ENCODE measurements at regions of chr1 and their contacts with region 1.

Region 1: GRCh38 chr1:155379631-155380090 is 59.0 kb downstream of the RUSC1 start:
- DNase-seq: no peak

Region 2: DNA sequence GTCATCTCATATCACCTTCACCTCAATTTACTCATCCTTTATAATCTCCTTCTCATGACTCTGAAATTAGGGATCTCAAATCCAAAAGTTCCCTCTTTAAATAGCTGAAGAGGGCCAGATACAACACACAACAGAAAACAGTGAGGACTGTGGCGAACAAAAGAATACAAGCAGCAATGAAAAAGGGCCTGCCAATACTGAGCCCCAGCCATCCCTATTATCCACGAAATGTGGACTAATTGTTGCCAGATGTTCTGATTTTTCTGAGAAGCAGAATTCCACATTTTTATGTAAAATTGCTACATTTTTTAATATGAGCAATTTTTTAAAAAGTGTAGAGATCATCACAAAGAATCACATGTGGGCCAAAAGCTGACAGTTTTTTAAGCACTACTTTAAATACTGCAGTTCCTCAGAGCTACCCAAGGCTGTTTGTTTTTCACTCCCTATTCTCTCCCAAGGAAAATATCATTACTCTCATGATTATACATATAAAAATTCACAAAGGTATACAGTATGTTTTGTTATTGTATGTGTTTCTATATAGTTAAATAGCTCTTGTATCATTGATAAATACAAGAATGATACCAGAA is 92.9 kb after region 1 on chr1:
- intact Hi-C with region 1: loop called (anchors 5 kb)
- DNase-seq: no peak